ENCODE measurements at regions of chr4 and their contacts with region 1.

Region 1: DNA sequence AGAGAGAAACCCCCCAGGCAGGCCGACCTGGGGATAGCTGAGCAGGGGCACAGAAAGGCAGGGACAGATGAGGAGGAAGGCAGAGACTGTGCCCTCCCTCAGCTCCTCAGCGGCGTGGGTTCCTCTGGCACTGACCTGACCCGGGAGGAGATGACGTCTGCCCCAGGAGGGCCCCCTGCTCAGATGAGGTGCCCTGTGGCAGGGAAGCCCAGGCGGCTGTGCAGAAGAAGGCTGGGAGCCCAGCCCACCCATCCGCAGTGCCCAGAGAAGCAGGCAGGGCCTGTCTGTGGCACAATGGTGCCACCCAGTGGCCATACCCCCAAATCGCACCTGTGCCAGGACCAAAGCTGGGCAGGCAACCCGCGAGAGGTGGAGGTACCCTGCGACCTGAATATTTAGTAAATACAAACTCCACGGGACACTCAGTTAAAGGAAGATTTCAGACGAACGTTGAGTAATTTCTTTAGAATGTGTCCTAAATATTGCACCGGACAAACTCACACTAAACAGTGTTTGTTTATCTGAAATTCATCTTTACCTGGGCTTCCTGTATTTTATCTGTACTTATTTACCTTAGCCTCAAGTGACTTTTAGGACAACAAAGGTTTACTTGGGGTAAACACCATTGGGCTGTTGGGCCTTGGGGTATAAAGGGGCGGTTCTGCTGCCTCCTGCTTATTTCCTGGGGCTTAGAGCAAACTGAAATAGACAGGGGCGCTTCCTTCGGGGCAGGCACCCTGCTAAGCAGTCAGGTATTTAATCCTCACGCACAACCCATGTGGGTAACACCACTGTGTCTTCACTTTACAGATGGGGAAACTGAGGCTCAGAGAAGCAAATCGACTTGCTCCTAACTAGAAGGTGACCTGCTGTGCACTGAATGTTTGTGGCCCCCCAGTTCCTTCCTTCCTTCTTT is 46.5 kb upstream of the HMX1 start:
- DNase-seq: peak; percentile 42 to 72 (median 54)
- ATAC-seq: peak; percentile 59
- H3K4me3 ChIP-seq: no peak overlapping the region
- H3K4me3 Mint-ChIP-seq: no peak overlapping the region
- H3K27ac ChIP-seq: no peak overlapping the region
- H3K27ac Mint-ChIP-seq: no peak overlapping the region
- H3K4me1 ChIP-seq: peaks cover 5% of the 10 kb centered on the region
- H3K4me1 Mint-ChIP-seq: peaks cover 2% of the 10 kb centered on the region
- H3K27me3 ChIP-seq: peaks cover 0 to 2% of the 10 kb centered on the region in 2 experiments
- H3K27me3 Mint-ChIP-seq: peaks cover 15% of the 10 kb centered on the region
- CTCF ChIP-seq: peak; percentile 57

Region 2: GRCh38 chr4:7342223-7343080 is 1575.7 kb before region 1 on chr4:
- CTCF ChIA-PET with region 1: no interaction called
- POLR2A ChIA-PET with region 1: no interaction called
- intact Hi-C with region 1: no loop called
- DNase-seq: no peak
- ATAC-seq: no peak
- H3K4me3 ChIP-seq: no peak overlapping the region
- H3K4me3 Mint-ChIP-seq: no peak overlapping the region
- H3K27ac ChIP-seq: no peak overlapping the region
- H3K27ac Mint-ChIP-seq: no peak overlapping the region
- H3K4me1 ChIP-seq: no peaks in the 10 kb centered on the region
- H3K4me1 Mint-ChIP-seq: no peaks in the 10 kb centered on the region
- H3K27me3 ChIP-seq: no peaks in the 10 kb centered on the region
- H3K27me3 Mint-ChIP-seq: no peaks in the 10 kb centered on the region
- CTCF ChIP-seq: no peak

Region 3: DNA sequence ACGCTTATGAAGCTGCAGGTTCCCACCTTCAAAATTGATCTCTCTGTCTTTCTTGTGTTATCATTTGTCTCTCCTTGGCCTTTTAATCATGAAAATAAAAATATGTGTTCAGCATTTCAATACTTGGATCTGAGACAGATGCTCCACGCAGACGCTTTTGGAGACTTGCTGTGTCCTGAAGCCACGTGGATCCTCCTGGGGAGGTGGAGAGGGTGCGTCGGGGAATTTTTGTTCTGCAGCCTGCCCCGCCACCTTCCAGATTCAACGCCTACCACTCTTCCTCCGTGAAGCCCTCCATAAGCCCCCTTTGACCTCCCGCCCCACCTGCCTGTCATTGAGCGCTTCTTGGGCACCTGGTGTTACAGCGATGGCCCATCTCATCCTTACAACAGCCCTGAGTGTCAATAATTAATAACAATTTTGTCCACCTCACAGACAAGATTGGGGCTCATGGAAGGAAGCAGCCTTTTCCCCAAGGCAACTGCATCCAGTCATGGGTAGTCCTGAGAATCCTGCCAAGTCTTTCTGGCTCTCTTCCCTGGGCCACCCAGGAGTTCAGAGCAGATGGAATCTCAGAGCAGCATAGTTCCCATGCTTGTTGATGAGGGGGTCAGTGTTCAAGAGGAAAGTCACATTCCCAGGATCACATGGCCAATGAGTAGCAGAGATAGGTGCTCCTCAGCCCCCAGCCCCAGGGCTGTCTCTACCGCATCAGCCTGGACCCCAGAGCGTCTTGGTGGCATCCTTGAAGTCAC is 1310.8 kb before region 1 on chr4:
- CTCF ChIA-PET with region 1: no interaction called
- POLR2A ChIA-PET with region 1: no interaction called
- intact Hi-C with region 1: no loop called
- DNase-seq: no peak
- ATAC-seq: no peak
- H3K4me3 ChIP-seq: no peak overlapping the region
- H3K4me3 Mint-ChIP-seq: no peak overlapping the region
- H3K27ac ChIP-seq: no peak overlapping the region
- H3K27ac Mint-ChIP-seq: no peak overlapping the region
- H3K4me1 ChIP-seq: no peaks in the 10 kb centered on the region
- H3K4me1 Mint-ChIP-seq: no peaks in the 10 kb centered on the region
- H3K27me3 ChIP-seq: no peaks in the 10 kb centered on the region
- H3K27me3 Mint-ChIP-seq: peaks cover 5% of the 10 kb centered on the region
- CTCF ChIP-seq: no peak

Region 4: GRCh38 chr4:8255698-8256441 is 662.3 kb before region 1 on chr4:
- CTCF ChIA-PET with region 1: no interaction called
- POLR2A ChIA-PET with region 1: no interaction called
- intact Hi-C with region 1: no loop called
- DNase-seq: no peak
- ATAC-seq: no peak
- H3K4me3 ChIP-seq: no peak overlapping the region
- H3K4me3 Mint-ChIP-seq: no peak overlapping the region
- H3K27ac ChIP-seq: no peak overlapping the region
- H3K27ac Mint-ChIP-seq: no peak overlapping the region
- H3K4me1 ChIP-seq: no peaks in the 10 kb centered on the region
- H3K4me1 Mint-ChIP-seq: no peaks in the 10 kb centered on the region
- H3K27me3 ChIP-seq: no peaks in the 10 kb centered on the region
- H3K27me3 Mint-ChIP-seq: no peaks in the 10 kb centered on the region
- CTCF ChIP-seq: no peak

Region 5: GRCh38 chr4:8468746-8469535 is 449.2 kb before region 1 on chr4:
- CTCF ChIA-PET with region 1: no interaction called
- POLR2A ChIA-PET with region 1: no interaction called
- intact Hi-C with region 1: loop called in 1 of 2 experiments (anchors 5 kb)
- DNase-seq: peak in 8 of 9 experiments; percentile 11 to 58 (median 42)
- ATAC-seq: peak; percentile 89
- H3K4me3 ChIP-seq: no peak overlapping the region
- H3K4me3 Mint-ChIP-seq: no peak overlapping the region
- H3K27ac ChIP-seq: no peak overlapping the region
- H3K27ac Mint-ChIP-seq: no peak overlapping the region
- H3K4me1 ChIP-seq: no peaks in the 10 kb centered on the region
- H3K4me1 Mint-ChIP-seq: no peaks in the 10 kb centered on the region
- H3K27me3 ChIP-seq: no peaks in the 10 kb centered on the region
- H3K27me3 Mint-ChIP-seq: no peaks in the 10 kb centered on the region
- CTCF ChIP-seq: peak; percentile 62

Region 6: DNA sequence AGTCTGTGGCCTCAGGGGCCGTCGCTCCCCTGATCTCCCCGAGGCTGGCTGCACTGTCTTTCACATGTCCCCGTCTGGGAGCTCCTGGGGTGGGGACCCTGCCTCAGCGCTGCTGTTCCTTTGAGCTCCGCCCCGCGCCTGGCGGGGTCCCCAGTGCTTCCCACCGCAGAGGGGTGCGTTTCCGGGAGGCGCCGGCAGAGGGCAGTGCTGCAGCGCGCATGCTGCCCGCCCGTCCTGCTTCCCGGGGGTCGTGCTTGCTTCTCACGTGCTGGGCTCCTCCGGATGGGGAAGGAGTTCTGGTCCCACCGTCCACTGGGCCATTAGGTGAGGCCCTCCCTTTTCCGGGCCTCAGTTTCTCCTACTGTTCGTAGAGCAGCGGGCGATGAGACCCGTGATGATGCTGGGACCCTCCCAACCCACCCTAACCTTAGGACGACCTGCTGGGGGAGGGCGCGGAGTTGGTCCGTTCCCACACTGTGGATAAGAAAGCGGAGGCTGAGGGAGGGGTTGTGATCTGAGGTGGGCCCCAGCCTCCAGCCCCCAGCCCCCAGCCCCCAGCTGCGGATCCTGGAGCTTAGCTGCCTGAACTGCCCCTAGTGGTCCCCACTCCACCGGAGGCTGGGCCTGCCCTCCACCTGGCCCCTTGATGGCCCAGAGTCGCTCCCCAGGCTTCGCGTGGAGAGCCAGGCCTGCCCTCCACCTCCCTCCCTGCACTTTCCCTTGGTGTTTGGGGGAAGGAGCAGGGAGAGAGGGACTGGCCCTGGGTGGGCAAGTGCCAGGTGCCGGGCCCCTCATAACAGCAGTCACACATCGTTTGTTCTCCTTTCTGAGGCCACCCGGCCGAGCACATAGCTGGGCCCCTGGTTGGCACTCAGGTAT is 310.3 kb before region 1 on chr4:
- CTCF ChIA-PET with region 1: no interaction called
- POLR2A ChIA-PET with region 1: no interaction called
- intact Hi-C with region 1: loop called in 1 of 2 experiments (anchors 10 kb)
- DNase-seq: peak in 7 of 9 experiments; percentile 14 to 39 (median 30)
- ATAC-seq: no peak
- H3K4me3 ChIP-seq: no peak overlapping the region
- H3K4me3 Mint-ChIP-seq: no peak overlapping the region
- H3K27ac ChIP-seq: no peak overlapping the region
- H3K27ac Mint-ChIP-seq: no peak overlapping the region
- H3K4me1 ChIP-seq: no peaks in the 10 kb centered on the region
- H3K4me1 Mint-ChIP-seq: no peaks in the 10 kb centered on the region
- H3K27me3 ChIP-seq: no peaks in the 10 kb centered on the region
- H3K27me3 Mint-ChIP-seq: peaks cover 12% of the 10 kb centered on the region
- CTCF ChIP-seq: peak; percentile 88

Region 7: GRCh38 chr4:8871417-8872401 is 46.4 kb before region 1 on chr4 and contains the start of gene HMX1:
- CTCF ChIA-PET with region 1: no interaction called
- POLR2A ChIA-PET with region 1: no interaction called
- intact Hi-C with region 1: no loop called
- DNase-seq: no peak
- ATAC-seq: no peak
- H3K4me3 ChIP-seq: no peak within 1 kb of the TSS
- H3K4me3 Mint-ChIP-seq: no peak within 1 kb of the TSS
- H3K27ac ChIP-seq: no peak within 1 kb of the TSS
- H3K27ac Mint-ChIP-seq: no peak within 1 kb of the TSS
- H3K4me1 ChIP-seq: no peaks in the 10 kb centered on the region
- H3K4me1 Mint-ChIP-seq: peaks cover 8% of the 10 kb centered on the region
- H3K27me3 ChIP-seq: peaks cover 5 to 14% of the 10 kb centered on the region in 2 experiments
- H3K27me3 Mint-ChIP-seq: peaks cover 52% of the 10 kb centered on the region
- CTCF ChIP-seq: no peak
- total RNA-seq, gene HMX1: not detected